Endothelial cell of umbilical vein (primary cell): ENCODE measurements at regions of chrX and their contacts with region 1.

Region 1: DNA sequence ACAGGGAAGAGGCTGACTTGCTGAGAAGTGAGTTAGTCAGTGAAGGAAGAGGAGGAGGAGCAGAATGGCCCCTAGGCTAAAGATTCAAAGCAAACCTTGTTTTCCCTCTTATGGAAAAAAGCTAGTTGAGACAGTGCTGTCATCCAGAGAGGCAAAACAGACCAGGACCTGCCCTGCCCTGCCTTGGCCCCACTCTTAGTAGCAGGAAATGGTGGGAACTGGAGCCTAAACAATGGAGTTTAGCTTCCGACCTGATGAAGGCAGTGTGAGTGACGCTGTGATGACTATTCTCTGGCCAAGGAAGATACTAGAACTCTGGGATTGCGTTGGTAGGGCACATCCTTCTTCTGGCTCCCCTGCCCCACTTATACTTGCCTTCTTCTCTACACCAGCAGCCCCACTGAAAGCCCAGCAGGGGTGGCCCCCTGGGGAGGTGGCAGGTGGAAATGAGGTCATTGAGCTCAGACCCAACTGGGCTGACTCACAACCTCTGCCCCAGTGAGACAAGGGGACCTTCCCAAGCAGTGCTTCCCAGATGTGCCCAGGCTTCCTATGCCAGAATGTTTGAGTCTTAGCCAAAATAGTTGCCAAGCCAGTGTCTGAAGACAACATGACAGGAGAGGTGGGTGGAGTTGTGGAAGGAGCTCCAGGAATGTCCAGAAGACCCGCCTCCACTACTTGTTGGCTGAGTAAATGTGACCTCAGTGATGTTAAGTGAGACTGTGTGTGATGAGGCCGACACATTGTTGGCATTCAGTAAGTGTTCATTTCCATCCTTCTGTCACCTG is 38.8 kb downstream of the MSN start:
- DNase-seq: peak; percentile 76
- H3K4me3 ChIP-seq: no peak overlapping the region
- H3K27ac ChIP-seq: peak overlapping the region; percentile 89
- H3K4me1 ChIP-seq: peaks cover 55% of the 10 kb centered on the region
- H3K27me3 ChIP-seq: no peaks in the 10 kb centered on the region
- CTCF ChIP-seq: no peak
- POLR2A ChIP-seq: no peak

Region 2: DNA sequence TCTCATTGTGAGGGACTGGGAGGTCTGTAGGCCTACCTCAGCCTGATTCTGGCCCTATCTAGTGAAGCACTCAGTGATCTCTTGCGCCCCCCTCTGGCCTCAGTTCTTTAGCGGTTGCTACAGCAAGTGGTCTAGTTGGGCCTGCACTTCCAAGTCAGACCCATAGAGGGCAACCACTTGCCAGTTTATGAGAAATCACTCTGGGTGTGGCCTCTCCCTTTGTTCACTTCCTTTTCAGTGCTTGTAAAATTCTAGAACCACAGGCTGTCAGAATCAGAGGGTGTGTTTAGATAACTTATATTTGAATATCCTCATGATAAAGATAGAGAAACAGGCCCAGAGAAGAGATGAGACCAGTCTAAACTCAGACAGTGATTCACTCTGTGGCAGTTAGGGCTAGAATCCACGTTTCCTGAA is 110.8 kb before region 1 on chrX:
- CTCF ChIA-PET with region 1: interaction called, 15 read pairs
- POLR2A ChIA-PET with region 1: interaction called, 5 read pairs
- dilution Hi-C with region 1: no loop called
- intact Hi-C with region 1: loop called (anchors 1 kb)
- DNase-seq: peak; percentile 90
- H3K4me3 ChIP-seq: no peak overlapping the region
- H3K27ac ChIP-seq: peak overlapping the region; percentile 92
- H3K4me1 ChIP-seq: peaks cover 28% of the 10 kb centered on the region
- H3K27me3 ChIP-seq: no peaks in the 10 kb centered on the region
- CTCF ChIP-seq: peak; percentile 88 to 98
- POLR2A ChIP-seq: no peak

Region 3: GRCh38 chrX:65644621-65645270 is 61.5 kb before region 1 on chrX:
- CTCF ChIA-PET with region 1: interaction called, 4 read pairs
- POLR2A ChIA-PET with region 1: no interaction called
- dilution Hi-C with region 1: no loop called
- intact Hi-C with region 1: loop called (anchors 2 kb)
- DNase-seq: peak; percentile 90
- H3K4me3 ChIP-seq: no peak overlapping the region
- H3K27ac ChIP-seq: peak overlapping the region; percentile 70
- H3K4me1 ChIP-seq: peaks cover 22% of the 10 kb centered on the region
- H3K27me3 ChIP-seq: no peaks in the 10 kb centered on the region
- CTCF ChIP-seq: no peak
- POLR2A ChIP-seq: no peak

Region 4: GRCh38 chrX:65677954-65678469 is 28.2 kb before region 1 on chrX:
- CTCF ChIA-PET with region 1: interaction called, 19 read pairs
- POLR2A ChIA-PET with region 1: interaction called, 7 read pairs
- dilution Hi-C with region 1: no loop called
- intact Hi-C with region 1: loop called (anchors 1 kb)
- DNase-seq: peak; percentile 94
- H3K4me3 ChIP-seq: peak overlapping the region in 1 of 3 experiments; percentile 23
- H3K27ac ChIP-seq: peak overlapping the region; percentile 94
- H3K4me1 ChIP-seq: peaks cover 78% of the 10 kb centered on the region
- H3K27me3 ChIP-seq: no peaks in the 10 kb centered on the region
- CTCF ChIP-seq: no peak
- POLR2A ChIP-seq: peak; percentile 4

Region 5: GRCh38 chrX:65720381-65720964 is 14.2 kb after region 1 on chrX:
- CTCF ChIA-PET with region 1: interaction called, 11 read pairs
- POLR2A ChIA-PET with region 1: interaction called, 8 read pairs
- dilution Hi-C with region 1: no loop called
- intact Hi-C with region 1: loop called (anchors 1 kb)
- DNase-seq: peak; percentile 75
- H3K4me3 ChIP-seq: no peak overlapping the region
- H3K27ac ChIP-seq: peak overlapping the region; percentile 89
- H3K4me1 ChIP-seq: peaks cover 50% of the 10 kb centered on the region
- H3K27me3 ChIP-seq: no peaks in the 10 kb centered on the region
- CTCF ChIP-seq: peak; percentile 3 to 6
- POLR2A ChIP-seq: no peak